A549 (cell line): ENCODE measurements at regions of chr16 and their contacts with region 1.

Region 1: GRCh38 chr16:75110637-75111513 is 5.7 kb downstream of the LDHD start:
- DNase-seq: peak; percentile 87 to 90
- ATAC-seq: peak; percentile 76 to 89
- H3K4me3 ChIP-seq: peak overlapping the region; percentile 22; the same call in 2 of the 3 replicates
- H3K27ac ChIP-seq: peak overlapping the region; percentile 49 to 90
- H3K4me1 ChIP-seq: peaks cover 40% of the 10 kb centered on the region
- CTCF ChIP-seq: peak; percentile 84
- EP300 ChIP-seq: no peak
- POLR2A ChIP-seq: no peak
- RAD21 ChIP-seq: peak; percentile 94 to 95

Region 2: DNA sequence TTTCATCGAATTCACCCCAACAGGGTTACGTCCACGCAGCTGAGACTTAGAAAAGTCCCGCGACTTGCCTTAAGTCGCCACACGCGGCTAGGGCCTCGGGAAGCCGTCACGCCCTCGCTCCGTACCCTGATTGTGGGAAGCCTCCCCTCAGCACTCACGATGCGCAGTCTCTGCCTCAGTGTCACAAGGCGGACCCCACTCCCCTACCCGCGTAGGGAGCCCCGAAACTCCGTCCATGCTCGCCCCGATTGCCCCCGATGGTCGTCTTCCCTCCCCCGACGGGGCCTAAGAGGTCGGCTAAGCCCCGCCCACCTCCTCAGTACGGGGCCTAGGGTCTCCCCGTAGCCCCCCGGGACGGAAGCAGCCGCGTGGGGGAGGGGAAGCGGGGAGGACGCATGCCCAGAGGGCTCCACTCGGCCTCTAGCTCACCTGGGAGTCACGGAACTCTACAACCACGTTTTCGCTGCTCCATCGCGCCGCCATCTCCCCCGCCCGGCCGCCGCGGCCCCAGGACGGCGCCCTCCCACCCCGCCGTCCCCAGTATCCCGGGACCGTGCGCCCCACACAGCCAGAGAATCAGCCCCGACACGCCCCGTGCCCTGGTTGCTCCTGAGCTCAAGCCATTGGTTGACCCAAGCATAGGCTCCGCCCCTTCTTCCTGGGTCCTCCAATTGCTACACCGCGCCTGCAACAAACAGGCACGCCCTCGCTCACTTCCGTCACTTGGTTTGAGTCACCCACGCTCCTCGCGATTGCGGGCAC is 126.2 kb before region 1 on chr16 and contains the start of gene WDR59:
- CTCF ChIA-PET with region 1: interaction called, 41 read pairs
- POLR2A ChIA-PET with region 1: interaction called, 13 read pairs
- DNase-seq: peak; percentile 54 to 94
- ATAC-seq: peak; percentile 99
- H3K4me3 ChIP-seq: peak within 1 kb of the TSS; percentile 100
- H3K27ac ChIP-seq: peak within 1 kb of the TSS; percentile 92 to 94
- H3K4me1 ChIP-seq: 0 out of 3 replicates have a peak, but pooled peaks cover 2% of the 10 kb centered on the region
- CTCF ChIP-seq: no peak
- EP300 ChIP-seq: no peak
- POLR2A ChIP-seq: peak; percentile 72
- RAD21 ChIP-seq: no peak
- polyA plus RNA-seq, gene WDR59: 52.2 and 57.2 TPM in 2 replicates

Region 3: DNA sequence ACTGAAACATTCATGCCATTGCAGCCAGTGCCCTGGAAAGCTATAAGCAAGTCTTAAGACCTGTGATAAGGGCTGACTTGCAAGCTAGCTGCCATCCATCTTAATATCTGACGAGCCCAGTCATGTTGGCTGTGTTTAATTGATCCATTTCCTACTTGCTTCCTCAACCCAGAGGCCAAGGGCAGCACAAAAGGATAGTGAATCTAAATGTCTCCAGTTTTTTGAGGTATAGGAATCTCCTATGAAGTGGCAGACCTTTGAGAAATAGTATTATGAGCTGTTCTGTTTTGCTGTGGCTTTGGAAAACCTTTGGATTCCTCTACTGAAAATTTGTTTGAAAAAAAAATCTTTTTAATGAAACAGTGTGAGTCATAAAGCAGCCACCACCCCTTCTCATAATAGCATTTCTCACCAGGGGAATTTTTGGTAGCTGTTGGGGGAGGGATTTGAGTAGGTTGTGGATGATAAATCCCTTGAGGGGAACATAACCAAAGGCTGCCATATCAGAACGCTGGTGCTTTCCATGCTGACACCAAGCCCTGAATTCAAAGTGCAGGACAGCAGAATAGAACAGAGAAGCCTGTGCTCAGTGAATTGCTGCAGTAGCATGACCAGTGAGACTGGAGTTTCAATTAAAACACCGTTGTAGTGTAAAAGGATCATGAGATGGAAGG is 99.1 kb before region 1 on chr16:
- CTCF ChIA-PET with region 1: interaction called, 92 read pairs
- POLR2A ChIA-PET with region 1: no interaction called
- DNase-seq: peak in 1 of 2 experiments; percentile 59
- ATAC-seq: peak; percentile 60 to 74
- H3K4me3 ChIP-seq: no peak overlapping the region
- H3K27ac ChIP-seq: peak overlapping the region; percentile 49 to 71; a peak in 5 of 6 replicates
- H3K4me1 ChIP-seq: peaks cover 29% of the 10 kb centered on the region
- CTCF ChIP-seq: no peak
- EP300 ChIP-seq: no peak
- POLR2A ChIP-seq: no peak
- RAD21 ChIP-seq: no peak

Region 4: GRCh38 chr16:75025761-75026160 is 85.1 kb before region 1 on chr16:
- CTCF ChIA-PET with region 1: interaction called, 16 read pairs
- POLR2A ChIA-PET with region 1: no interaction called
- DNase-seq: no peak
- ATAC-seq: peak; percentile 48 to 58; a peak in 3 of 6 replicates
- H3K4me3 ChIP-seq: no peak overlapping the region
- H3K27ac ChIP-seq: peak overlapping the region; percentile 44 to 61; a peak in 5 of 6 replicates
- H3K4me1 ChIP-seq: peaks cover 44% of the 10 kb centered on the region
- CTCF ChIP-seq: no peak
- EP300 ChIP-seq: no peak
- POLR2A ChIP-seq: no peak
- RAD21 ChIP-seq: no peak

Region 5: DNA sequence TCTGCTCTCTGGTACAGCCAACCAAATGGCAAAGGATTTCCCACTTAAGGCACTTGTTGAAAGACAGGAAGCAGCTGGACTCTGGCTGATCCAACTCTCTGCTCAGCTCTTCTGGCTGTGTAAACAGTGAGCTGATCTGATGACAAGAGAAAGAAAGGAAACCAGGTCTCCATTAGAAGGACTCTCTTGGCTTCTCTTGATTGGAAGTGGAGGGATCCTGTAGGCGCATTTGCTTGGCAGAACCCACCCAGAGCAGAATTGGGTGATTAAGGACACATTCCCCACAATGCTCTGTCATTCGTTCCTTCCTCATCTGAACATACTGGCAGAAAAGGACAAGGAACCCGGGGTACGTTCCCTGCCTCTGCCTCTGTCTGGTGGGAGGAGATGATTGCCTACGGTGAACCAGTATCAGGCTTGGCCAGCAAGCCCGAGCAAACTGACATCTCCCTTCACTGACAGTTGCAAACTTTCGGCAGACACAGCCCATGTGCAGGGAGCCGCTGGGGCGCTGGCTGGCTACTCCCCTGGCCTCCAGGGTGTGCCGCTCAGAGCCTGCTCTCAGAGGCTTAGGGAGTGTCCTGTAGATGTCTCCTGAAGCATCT is 23.4 kb before region 1 on chr16:
- CTCF ChIA-PET with region 1: interaction called, 12 read pairs
- POLR2A ChIA-PET with region 1: no interaction called
- DNase-seq: no peak
- ATAC-seq: peak; percentile 44 to 46; a peak in 3 of 6 replicates
- H3K4me3 ChIP-seq: no peak overlapping the region
- H3K27ac ChIP-seq: peak overlapping the region in 1 of 2 experiments; percentile 60; a peak in 3 of 6 replicates
- H3K4me1 ChIP-seq: peaks cover 47% of the 10 kb centered on the region
- CTCF ChIP-seq: no peak
- EP300 ChIP-seq: no peak
- POLR2A ChIP-seq: no peak
- RAD21 ChIP-seq: no peak

Region 6: DNA sequence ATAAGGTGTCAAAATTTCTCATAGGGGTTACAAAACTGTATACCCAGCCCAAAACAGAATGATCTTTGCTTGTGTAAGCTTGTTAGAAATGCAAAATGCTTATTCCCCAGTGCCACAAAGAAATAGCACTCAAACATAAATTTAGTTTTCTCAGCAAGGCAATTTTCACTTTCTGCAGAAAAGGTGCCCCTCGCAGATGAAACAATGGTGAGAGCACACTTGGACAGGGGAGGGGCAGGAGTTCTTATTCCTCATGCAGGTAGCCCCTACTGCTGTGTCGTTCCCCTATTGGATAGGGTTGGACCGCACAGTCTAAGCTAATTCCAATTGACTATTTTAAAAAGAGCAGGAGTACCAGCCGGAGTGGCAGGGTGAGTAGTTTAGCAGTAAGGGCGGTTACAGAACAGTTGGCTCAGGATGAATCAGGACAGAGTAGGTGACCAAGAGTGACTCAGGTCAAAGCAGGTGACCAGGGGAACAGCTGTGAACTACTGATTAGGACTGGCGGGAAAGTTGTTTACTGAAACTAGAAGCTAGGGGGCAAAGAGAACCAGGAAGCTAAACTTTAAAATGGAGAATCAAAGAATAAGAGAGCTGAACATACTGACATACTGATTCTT is 11.2 kb after region 1 on chr16:
- CTCF ChIA-PET with region 1: interaction called, 39 read pairs
- POLR2A ChIA-PET with region 1: no interaction called
- DNase-seq: no peak
- ATAC-seq: no peak
- H3K4me3 ChIP-seq: no peak overlapping the region
- H3K27ac ChIP-seq: no peak overlapping the region
- H3K4me1 ChIP-seq: no peaks in the 10 kb centered on the region
- CTCF ChIP-seq: no peak
- EP300 ChIP-seq: no peak
- POLR2A ChIP-seq: no peak
- RAD21 ChIP-seq: no peak